ENCODE measurements at regions of chr11 and their contacts with region 1.

Region 1: DNA sequence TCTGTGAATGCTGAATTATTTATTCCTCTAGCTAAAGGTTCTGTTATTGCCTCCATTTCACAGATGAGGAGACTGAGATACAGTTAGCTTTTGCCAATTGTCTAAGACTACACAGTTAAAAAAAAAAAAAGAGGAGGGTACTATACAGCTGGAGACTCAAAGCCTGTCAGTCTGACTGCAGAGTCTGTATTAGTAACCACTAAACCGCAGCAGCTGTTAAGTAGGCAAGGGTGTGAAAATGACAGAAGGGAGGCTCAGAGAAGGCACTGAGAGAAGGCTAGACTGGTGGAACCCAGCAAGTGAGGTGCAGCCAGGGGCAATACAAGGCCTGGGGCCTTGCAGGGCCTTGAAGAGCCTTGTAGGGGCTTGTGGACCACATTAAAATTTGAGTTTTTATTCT is 181.2 kb downstream of the CSNK2A3 start:
- DNase-seq: no peak
- H3K4me3 ChIP-seq: no peak overlapping the region
- H3K27ac ChIP-seq: peak overlapping the region in 1 of 5 donors; percentile 36
- H3K4me1 ChIP-seq: peaks cover 0 to 12% (median 3%) of the 10 kb centered on the region in 4 donors
- H3K27me3 ChIP-seq: no peaks in the 10 kb centered on the region
- CTCF ChIP-seq: no peak
- EP300 ChIP-seq: no peak
- POLR2A ChIP-seq: no peak

Region 2: GRCh38 chr11:11349870-11350337 is 178.1 kb after region 1 on chr11:
- intact Hi-C with region 1: loop called (anchors 10 kb)
- DNase-seq: peak in 1 of 2 donors; percentile 83
- H3K4me3 ChIP-seq: no peak overlapping the region
- H3K27ac ChIP-seq: peak overlapping the region in 3 of 5 donors; percentile 6 to 26 (median 13)
- H3K4me1 ChIP-seq: peaks cover 0 to 30% (median 23%) of the 10 kb centered on the region in 4 donors
- H3K27me3 ChIP-seq: no peaks in the 10 kb centered on the region
- CTCF ChIP-seq: no peak
- EP300 ChIP-seq: no peak
- POLR2A ChIP-seq: no peak

Measured in stomach (tissue), 19 donors.